OCI-LY7 (cell line): ENCODE measurements at regions of chr20 and their contacts with region 1.

Region 1: DNA sequence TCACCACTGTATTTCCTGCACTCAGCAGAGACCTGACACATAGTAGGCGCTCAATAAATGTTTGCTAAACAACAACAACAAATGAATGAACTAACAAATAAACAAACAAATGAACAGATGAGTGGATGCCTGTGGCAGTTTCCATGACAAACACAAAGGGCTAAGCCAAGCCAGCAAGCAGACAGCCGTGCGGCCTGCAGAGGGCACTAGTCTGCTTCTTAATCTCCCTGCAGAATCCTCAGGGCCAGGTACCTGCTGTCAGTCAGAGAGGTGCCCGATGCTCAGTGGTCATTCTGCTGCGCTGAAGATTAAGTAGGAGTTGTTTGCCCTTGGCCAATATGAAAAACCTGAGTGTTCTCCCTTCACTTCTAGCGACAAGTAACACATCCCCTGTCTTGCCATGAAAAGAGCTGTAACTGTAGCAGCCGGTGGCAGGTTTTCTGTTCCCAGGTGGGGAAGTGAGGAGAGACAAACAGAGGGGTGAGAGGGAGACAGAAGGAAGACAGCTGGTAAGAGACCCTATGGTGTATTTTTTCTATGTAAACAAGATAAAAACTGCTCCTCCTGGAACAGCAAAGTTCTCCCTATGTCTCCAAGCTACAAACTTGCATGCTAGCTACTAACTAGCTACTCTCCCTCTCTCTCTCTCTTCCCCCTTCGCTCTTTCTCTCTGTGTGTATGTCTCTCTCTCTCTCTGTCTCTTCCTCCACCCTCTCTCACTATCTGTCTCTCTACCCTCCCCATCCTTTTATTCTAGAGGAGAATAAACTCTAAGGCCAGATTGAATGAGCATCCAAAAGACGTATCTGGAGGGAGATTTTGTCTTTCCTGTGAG is at the start of gene MC3R:
- DNase-seq: peak; percentile 40
- H3K4me3 ChIP-seq: no peak within 1 kb of the TSS
- H3K27ac ChIP-seq: no peak within 1 kb of the TSS
- H3K4me1 ChIP-seq: no peaks in the 10 kb centered on the region
- CTCF ChIP-seq: peak; percentile 89
- total RNA-seq, gene MC3R: not detected in 2 replicates

Region 2: GRCh38 chr20:56343861-56344381 is 95.8 kb after region 1 on chr20:
- CTCF ChIA-PET with region 1: no interaction called
- POLR2A ChIA-PET with region 1: no interaction called
- intact Hi-C with region 1: loop called (anchors 5 kb)
- DNase-seq: no peak
- H3K4me3 ChIP-seq: no peak overlapping the region
- H3K27ac ChIP-seq: no peak overlapping the region
- H3K4me1 ChIP-seq: no peaks in the 10 kb centered on the region
- CTCF ChIP-seq: peak; percentile 53